WTC11 (cell line): ENCODE measurements at regions of chr13 and their contacts with region 1.

Region 1: GRCh38 chr13:69565334-69565733 is 542.3 kb upstream of the ATXN8OS start:
- DNase-seq: peak; percentile 34
- ATAC-seq: peak; percentile 95
- H3K4me3 Mint-ChIP-seq: no peak overlapping the region
- H3K27ac Mint-ChIP-seq: no peak overlapping the region
- H3K4me1 Mint-ChIP-seq: no peaks in the 10 kb centered on the region
- H3K27me3 Mint-ChIP-seq: no peaks in the 10 kb centered on the region
- CTCF ChIP-seq: peak; percentile 54

Region 2: DNA sequence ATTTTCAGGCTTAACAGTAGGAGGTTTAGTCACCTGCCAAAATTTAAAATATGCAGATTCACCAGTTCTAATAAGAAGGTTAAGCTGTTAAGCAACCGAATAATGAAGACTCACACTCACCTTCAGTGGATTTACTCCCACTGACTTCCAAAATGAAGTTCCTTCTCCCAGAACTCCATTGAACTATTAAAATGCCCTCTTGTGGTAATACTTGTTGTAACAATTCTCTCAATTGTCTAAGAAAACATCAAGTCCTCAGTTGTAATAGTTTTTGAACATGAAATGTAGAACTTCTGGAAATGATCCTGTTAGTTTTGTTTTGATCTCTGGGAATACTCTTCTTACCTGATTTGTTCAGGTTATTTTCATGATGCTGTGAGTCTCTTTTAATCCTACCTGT is 20.3 kb after region 1 on chr13:
- CTCF ChIA-PET with region 1: interaction called, 11 read pairs
- POLR2A ChIA-PET with region 1: no interaction called
- DNase-seq: no peak
- ATAC-seq: peak; percentile 16; the same call in 1 of the 2 replicates
- H3K4me3 Mint-ChIP-seq: no peak overlapping the region
- H3K27ac Mint-ChIP-seq: no peak overlapping the region
- H3K4me1 Mint-ChIP-seq: peaks cover 19% of the 10 kb centered on the region
- H3K27me3 Mint-ChIP-seq: no peaks in the 10 kb centered on the region
- CTCF ChIP-seq: no peak